CD8-positive, alpha-beta T cell (primary cell): ENCODE measurements at regions of chr5 and their contacts with region 1.

Region 1: GRCh38 chr5:96743065-96743768 is 64.5 kb downstream of the ERAP1 start:
- DNase-seq: peak in 1 of 9 experiments; percentile 21
- ATAC-seq: no peak
- H3K4me3 ChIP-seq: no peak overlapping the region
- H3K4me3 Mint-ChIP-seq: no peak overlapping the region
- H3K27ac ChIP-seq: peak overlapping the region in 1 of 2 experiments; percentile 18
- H3K27ac Mint-ChIP-seq: peak overlapping the region; percentile 6
- H3K4me1 ChIP-seq: no peaks in the 10 kb centered on the region
- H3K4me1 Mint-ChIP-seq: no peaks in the 10 kb centered on the region
- H3K27me3 ChIP-seq: no peaks in the 10 kb centered on the region
- H3K27me3 Mint-ChIP-seq: no peaks in the 10 kb centered on the region
- CTCF ChIP-seq: no peak

Region 2: GRCh38 chr5:96370976-96371375 is 372.2 kb before region 1 on chr5:
- CTCF ChIA-PET with region 1: no interaction called
- POLR2A ChIA-PET with region 1: no interaction called
- intact Hi-C with region 1: loop called in 1 of 2 experiments (anchors 5 kb)
- DNase-seq: no peak
- ATAC-seq: no peak
- H3K4me3 ChIP-seq: no peak overlapping the region
- H3K4me3 Mint-ChIP-seq: no peak overlapping the region
- H3K27ac ChIP-seq: no peak overlapping the region
- H3K27ac Mint-ChIP-seq: no peak overlapping the region
- H3K4me1 ChIP-seq: no peaks in the 10 kb centered on the region
- H3K4me1 Mint-ChIP-seq: peaks cover 3% of the 10 kb centered on the region
- H3K27me3 ChIP-seq: no peaks in the 10 kb centered on the region
- H3K27me3 Mint-ChIP-seq: peaks cover 28% of the 10 kb centered on the region
- CTCF ChIP-seq: no peak

Region 3: DNA sequence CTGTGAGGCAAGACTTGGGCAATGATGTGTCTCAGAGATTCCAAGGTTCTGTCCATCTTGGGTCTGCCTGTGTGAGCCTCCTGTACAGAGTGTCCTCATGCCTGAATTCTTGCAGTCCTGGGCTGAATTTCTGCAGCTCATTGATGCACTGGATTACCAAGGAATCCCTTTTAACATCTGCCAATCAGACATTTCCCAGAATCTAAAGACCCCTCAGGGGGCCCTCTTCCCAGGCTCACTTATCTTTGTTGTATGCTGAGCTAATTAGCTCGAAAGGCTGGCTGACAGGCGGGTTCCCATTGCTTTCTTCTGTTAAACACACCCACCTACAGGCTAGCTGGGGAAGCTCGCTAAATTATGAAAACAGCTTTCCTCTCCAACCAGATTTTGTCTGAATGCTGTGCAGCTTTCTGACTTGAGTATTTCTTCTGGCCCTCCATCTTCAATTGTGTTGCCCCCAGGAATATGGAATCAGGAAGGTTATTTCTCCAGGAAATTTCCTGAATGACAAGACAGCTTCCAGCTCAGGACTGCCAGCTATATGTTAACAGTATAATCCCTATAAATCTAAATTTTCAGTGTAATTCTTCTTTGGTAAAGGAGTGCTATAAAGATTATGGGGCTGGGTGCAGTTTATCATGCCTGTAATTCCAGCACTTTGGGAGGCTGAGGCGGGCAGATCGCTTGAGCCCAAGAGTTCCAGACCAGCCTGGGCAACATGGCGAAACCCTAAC is 399.5 kb after region 1 on chr5 and contains the start of gene LIX1:
- CTCF ChIA-PET with region 1: no interaction called
- POLR2A ChIA-PET with region 1: no interaction called
- intact Hi-C with region 1: no loop called
- DNase-seq: peak in 5 of 9 experiments; percentile 3 to 52 (median 32)
- ATAC-seq: peak; percentile 58
- H3K4me3 ChIP-seq: no peak within 1 kb of the TSS
- H3K4me3 Mint-ChIP-seq: no peak within 1 kb of the TSS
- H3K27ac ChIP-seq: no peak within 1 kb of the TSS
- H3K27ac Mint-ChIP-seq: no peak within 1 kb of the TSS
- H3K4me1 ChIP-seq: no peaks in the 10 kb centered on the region
- H3K4me1 Mint-ChIP-seq: no peaks in the 10 kb centered on the region
- H3K27me3 ChIP-seq: peaks cover 0 to 3% of the 10 kb centered on the region in 2 experiments
- H3K27me3 Mint-ChIP-seq: peaks cover 15% of the 10 kb centered on the region
- CTCF ChIP-seq: peak; percentile 29
- total RNA-seq, gene LIX1: not detected